Mammary epithelial cell (primary cell): ENCODE measurements at regions of chr22 and their contacts with region 1.

Region 1: GRCh38 chr22:46542011-46542985 is 4.9 kb upstream of the CELSR1 start:
- DNase-seq: peak; percentile 61
- H3K4me3 ChIP-seq: no peak overlapping the region
- H3K27ac ChIP-seq: peak overlapping the region; percentile 42
- H3K4me1 ChIP-seq: peaks cover 49% of the 10 kb centered on the region
- H3K27me3 ChIP-seq: no peaks in the 10 kb centered on the region
- CTCF ChIP-seq: peak; percentile 89 to 97

Region 2: DNA sequence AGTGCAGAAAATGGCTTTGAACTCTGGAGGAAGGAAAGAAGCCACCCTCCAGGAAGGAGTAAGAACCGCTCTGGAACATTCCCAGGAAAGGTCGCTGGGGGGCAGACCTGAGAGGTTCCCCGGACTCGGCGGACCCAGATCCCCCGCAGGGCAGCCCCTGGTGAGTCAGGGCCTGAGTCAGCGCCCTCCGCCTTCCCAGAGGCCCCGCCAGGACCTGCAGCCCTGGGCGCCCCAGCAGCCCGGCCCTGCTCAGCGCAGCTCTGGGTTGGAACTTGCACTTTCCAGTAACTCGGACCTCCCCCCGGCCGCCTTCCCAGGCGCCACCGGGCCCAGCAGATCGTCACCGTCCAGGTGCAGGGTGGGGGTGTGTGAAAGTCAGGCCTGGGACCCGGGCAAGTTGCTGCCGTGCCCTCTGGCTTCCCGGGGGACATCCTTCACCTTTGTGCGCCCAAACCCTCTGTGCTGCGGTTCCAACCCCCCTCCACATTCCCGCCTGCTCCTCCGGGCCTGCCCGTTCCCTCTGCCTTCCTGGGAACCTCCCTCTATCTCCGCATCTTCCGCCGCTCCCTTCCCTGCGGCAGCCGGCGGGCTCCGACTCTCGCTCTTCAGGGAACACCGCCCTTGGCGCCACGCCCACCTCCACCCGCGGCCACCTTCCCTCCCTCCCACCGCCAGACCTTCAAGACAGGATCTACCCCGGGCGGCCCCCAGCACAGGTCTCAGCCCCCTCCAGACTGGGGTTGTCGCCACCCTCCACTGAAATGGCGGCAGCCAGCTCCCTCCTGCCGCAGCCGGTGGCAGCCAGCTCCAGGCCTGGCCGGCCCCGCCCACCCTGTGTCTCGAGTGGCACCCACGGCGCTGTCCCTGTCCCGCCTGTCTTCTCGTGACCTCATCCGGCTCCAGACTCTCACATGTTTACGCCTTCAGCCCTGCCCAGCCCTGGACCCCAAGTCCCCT is 528.6 kb before region 1 on chr22:
- CTCF ChIA-PET with region 1: no interaction called
- dilution Hi-C with region 1: no loop called
- in situ Hi-C with region 1: loop called (anchors 25 kb)
- intact Hi-C with region 1: no loop called
- DNase-seq: peak; percentile 98
- H3K4me3 ChIP-seq: peak overlapping the region; percentile 48 to 66 (median 54)
- H3K27ac ChIP-seq: peak overlapping the region; percentile 91
- H3K4me1 ChIP-seq: peaks cover 41% of the 10 kb centered on the region
- H3K27me3 ChIP-seq: no peaks in the 10 kb centered on the region
- CTCF ChIP-seq: peak; percentile 69 to 85

Region 3: GRCh38 chr22:46122511-46122971 is 419.8 kb before region 1 on chr22:
- CTCF ChIA-PET with region 1: no interaction called
- dilution Hi-C with region 1: no loop called
- in situ Hi-C with region 1: loop called in 1 of 2 experiments (anchors 25 kb)
- intact Hi-C with region 1: loop called (anchors 2 kb)
- DNase-seq: no peak
- H3K4me3 ChIP-seq: no peak overlapping the region
- H3K27ac ChIP-seq: no peak overlapping the region
- H3K4me1 ChIP-seq: peaks cover 11% of the 10 kb centered on the region
- H3K27me3 ChIP-seq: no peaks in the 10 kb centered on the region
- CTCF ChIP-seq: peak; percentile 68 to 86

Region 4: DNA sequence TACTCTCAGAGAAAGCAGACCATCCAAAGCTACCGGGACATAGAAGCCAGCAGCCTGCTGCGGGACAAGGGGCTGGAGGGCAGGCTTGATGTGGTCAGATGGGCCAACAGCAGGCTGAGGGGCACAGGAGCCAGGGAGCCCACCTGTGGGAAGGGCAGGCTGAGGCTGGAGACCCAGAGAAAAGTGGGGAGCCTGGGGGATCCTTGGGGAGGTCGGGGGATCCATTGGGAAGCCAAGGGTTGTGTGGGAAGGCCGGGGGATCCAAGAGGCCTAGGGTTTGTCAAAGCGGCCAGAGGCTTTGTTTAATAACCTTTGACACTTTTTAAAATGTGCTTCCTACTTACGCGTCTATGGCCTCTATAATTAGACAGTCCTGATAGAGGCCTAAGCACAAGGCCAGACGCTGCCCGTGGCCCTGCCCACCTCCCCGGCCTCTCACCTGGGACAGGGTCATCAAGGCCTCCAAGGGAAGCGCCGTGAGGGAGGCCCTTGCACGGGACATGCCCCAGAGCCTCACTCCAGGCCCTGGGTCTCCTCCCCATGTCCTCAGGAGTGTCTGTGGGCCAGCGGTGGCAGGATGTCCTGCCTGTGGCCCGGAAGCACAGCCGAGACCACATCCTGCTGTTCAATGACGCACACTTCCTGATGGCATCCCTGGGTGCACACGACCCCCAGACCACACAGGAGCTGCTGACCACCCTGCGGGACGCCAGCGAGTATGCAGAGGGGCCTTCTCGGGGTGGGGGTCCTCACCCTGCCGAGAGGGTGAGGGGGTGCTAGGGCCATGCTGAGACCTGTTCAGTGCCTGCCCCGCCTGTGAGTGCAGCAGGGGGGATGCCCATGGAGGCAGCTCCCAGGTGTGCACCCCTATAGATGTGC is 254.2 kb before region 1 on chr22:
- CTCF ChIA-PET with region 1: no interaction called
- dilution Hi-C with region 1: no loop called
- in situ Hi-C with region 1: no loop called
- intact Hi-C with region 1: no loop called
- DNase-seq: no peak
- H3K4me3 ChIP-seq: no peak overlapping the region
- H3K27ac ChIP-seq: no peak overlapping the region
- H3K4me1 ChIP-seq: no peaks in the 10 kb centered on the region
- H3K27me3 ChIP-seq: no peaks in the 10 kb centered on the region
- CTCF ChIP-seq: no peak

Region 5: GRCh38 chr22:46362203-46362933 is 179.9 kb before region 1 on chr22:
- CTCF ChIA-PET with region 1: interaction called, 20 read pairs
- dilution Hi-C with region 1: no loop called
- in situ Hi-C with region 1: loop called (anchors 5 kb)
- intact Hi-C with region 1: loop called (anchors 1 kb)
- DNase-seq: no peak
- H3K4me3 ChIP-seq: no peak overlapping the region
- H3K27ac ChIP-seq: no peak overlapping the region
- H3K4me1 ChIP-seq: no peaks in the 10 kb centered on the region
- H3K27me3 ChIP-seq: no peaks in the 10 kb centered on the region
- CTCF ChIP-seq: no peak

Region 6: DNA sequence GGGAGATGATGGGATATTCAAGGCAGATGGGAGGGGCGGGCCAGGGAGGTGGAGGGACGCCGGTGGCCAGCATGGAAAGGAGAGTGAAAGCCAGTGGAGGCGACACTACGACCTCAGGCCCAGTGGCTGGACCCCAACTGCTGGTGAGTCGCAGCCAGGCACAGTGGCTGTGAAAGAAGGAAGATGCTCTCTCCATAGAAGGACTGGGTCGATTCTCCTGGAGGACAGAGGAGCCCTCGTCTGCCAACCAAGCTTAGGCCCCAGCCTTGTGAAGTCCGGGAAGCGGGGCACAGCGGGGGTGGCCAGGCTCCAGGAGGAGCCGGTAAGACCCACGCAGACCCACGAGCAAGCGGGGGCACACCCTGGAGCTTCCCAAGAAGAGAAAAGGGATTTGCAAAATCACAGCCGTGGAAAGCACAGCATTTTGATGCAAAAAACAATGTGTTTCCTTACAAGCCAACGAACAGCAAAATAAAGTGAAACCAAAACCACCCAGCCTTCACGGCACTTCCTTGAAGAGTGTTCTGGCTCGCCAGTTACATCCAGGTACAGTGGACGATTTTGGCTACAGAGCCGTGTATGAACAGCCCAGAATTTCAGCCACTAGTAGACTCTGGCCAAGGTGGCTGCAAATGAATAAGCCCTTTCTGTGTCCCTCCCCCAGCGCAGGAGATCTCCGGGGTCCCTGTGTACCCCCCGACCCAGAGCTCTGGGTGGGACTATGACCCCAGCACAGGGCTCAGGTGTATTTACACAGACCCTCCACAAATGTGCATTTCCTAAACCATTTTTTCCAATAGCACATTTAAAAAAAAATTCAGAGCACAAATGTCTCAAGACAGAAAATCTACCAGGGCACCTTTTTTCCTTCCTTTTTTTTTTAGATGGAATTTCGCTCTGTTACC is 109.9 kb before region 1 on chr22:
- CTCF ChIA-PET with region 1: no interaction called
- dilution Hi-C with region 1: no loop called
- in situ Hi-C with region 1: no loop called
- intact Hi-C with region 1: loop called (anchors 1 kb)
- DNase-seq: no peak
- H3K4me3 ChIP-seq: no peak overlapping the region
- H3K27ac ChIP-seq: no peak overlapping the region
- H3K4me1 ChIP-seq: peaks cover 4% of the 10 kb centered on the region
- H3K27me3 ChIP-seq: no peaks in the 10 kb centered on the region
- CTCF ChIP-seq: no peak

Region 7: GRCh38 chr22:46501701-46502100 is 40.6 kb before region 1 on chr22:
- CTCF ChIA-PET with region 1: no interaction called
- dilution Hi-C with region 1: no loop called
- in situ Hi-C with region 1: no loop called
- intact Hi-C with region 1: loop called (anchors 5 kb)
- DNase-seq: peak; percentile 83
- H3K4me3 ChIP-seq: no peak overlapping the region
- H3K27ac ChIP-seq: peak overlapping the region; percentile 33
- H3K4me1 ChIP-seq: peaks cover 40% of the 10 kb centered on the region
- H3K27me3 ChIP-seq: no peaks in the 10 kb centered on the region
- CTCF ChIP-seq: no peak